GM12878 (cell line): ENCODE measurements at regions of chr11 and their contacts with region 1.

Region 1: DNA sequence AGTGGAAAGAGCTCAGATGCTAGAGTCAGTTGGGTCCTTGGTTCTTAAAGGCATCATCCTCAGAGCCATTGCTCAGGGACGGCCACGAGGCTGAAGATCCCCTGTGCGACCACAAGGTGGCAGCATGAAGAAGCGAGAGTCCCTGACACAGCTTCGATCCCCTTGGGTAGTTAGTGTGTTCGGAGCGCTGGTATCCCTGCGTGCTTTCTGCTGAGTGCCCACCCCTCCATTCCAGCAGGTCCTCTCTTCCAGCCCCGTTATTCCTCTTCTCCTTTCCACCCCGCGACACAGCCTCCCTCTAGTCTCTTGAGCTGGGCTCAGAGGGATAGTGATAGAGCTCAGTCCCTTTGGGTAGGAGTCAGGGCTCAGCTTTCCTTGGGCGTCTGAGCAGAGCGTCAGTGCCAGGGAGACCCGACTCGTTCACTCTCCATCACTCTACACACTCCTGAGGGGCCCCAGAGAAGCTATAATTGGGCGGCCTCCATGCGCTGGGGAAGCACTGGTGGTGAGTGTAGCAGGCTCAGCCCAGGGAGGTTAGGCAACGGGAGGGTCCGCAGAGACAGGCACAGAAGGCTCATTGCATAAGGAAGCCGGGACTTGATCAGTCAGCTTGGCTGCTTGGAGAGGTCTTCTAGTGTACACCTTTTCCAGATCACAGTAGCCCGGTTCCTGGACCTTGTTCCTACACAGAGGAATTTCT is at the start of gene OR51D1:
- DNase-seq: peak; percentile 21
- ATAC-seq: peak; percentile 99
- H3K4me3 ChIP-seq: no peak within 1 kb of the TSS
- H3K27ac ChIP-seq: no peak within 1 kb of the TSS
- H3K4me1 ChIP-seq: no peaks in the 10 kb centered on the region
- H3K27me3 ChIP-seq: no peaks in the 10 kb centered on the region; a peak in 1 of 4 replicates
- CTCF ChIP-seq: peak; percentile 90 to 94 (median 91)
- EP300 ChIP-seq: no peak
- POLR2A ChIP-seq: no peak
- RAD21 ChIP-seq: peak; percentile 71
- polyA plus RNA-seq, gene OR51D1: not detected

Region 2: DNA sequence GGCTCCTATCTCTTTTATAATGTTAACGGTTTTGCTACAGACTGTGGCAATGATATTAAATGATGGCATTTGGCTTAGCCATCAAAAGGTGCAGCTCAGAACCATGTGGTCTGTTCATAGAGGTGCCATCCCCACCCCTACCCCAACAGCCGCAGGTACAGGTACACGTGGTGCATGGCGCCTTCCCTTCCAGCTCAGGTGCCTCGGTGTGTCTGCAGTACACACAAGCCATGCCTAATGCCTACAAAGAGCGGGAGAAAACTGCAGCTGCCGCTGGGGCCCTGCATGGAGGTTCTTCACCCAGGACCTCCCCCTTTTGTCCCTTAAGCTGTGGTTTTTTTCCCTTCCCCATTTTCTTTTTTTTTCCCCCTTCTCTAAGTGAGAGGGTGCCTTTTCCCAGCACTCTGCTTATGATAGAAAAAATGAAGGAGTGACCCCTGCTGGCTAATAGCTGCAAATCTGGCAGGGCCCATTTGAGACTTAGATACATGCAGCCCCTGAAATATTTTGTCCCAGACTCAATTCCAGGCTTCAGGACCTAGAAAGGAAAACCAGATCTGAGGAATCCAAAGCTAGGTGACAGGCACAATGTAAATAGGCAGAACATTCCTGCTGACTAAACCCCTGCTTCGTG is 85.6 kb before region 1 on chr11:
- CTCF ChIA-PET with region 1: no interaction called
- POLR2A ChIA-PET with region 1: no interaction called
- RAD21 ChIA-PET with region 1: no interaction called
- SMC1A ChIA-PET with region 1: no interaction called
- in situ Hi-C with region 1: no loop called
- intact Hi-C with region 1: no loop called
- DNase-seq: no peak
- ATAC-seq: peak; percentile 56; the same call in 1 of the 3 replicates
- H3K4me3 ChIP-seq: no peak overlapping the region
- H3K27ac ChIP-seq: no peak overlapping the region
- H3K4me1 ChIP-seq: no peaks in the 10 kb centered on the region
- H3K27me3 ChIP-seq: no peaks in the 10 kb centered on the region; a peak in 1 of 4 replicates
- CTCF ChIP-seq: peak; percentile 30 to 56 (median 46); a peak in 5 of 6 replicates
- EP300 ChIP-seq: no peak
- POLR2A ChIP-seq: no peak
- RAD21 ChIP-seq: peak; percentile 27

Region 3: GRCh38 chr11:4581443-4581842 is 55.7 kb before region 1 on chr11 and contains the start of gene OR52I2:
- CTCF ChIA-PET with region 1: no interaction called
- POLR2A ChIA-PET with region 1: no interaction called
- RAD21 ChIA-PET with region 1: no interaction called
- SMC1A ChIA-PET with region 1: no interaction called
- in situ Hi-C with region 1: no loop called
- intact Hi-C with region 1: no loop called
- DNase-seq: no peak
- ATAC-seq: no peak
- H3K4me3 ChIP-seq: no peak within 1 kb of the TSS
- H3K27ac ChIP-seq: no peak within 1 kb of the TSS
- H3K4me1 ChIP-seq: no peaks in the 10 kb centered on the region
- H3K27me3 ChIP-seq: no peaks in the 10 kb centered on the region; a peak in 1 of 4 replicates
- CTCF ChIP-seq: no peak
- EP300 ChIP-seq: no peak
- POLR2A ChIP-seq: no peak
- RAD21 ChIP-seq: no peak
- polyA plus RNA-seq, gene OR52I2: not detected

Region 4: DNA sequence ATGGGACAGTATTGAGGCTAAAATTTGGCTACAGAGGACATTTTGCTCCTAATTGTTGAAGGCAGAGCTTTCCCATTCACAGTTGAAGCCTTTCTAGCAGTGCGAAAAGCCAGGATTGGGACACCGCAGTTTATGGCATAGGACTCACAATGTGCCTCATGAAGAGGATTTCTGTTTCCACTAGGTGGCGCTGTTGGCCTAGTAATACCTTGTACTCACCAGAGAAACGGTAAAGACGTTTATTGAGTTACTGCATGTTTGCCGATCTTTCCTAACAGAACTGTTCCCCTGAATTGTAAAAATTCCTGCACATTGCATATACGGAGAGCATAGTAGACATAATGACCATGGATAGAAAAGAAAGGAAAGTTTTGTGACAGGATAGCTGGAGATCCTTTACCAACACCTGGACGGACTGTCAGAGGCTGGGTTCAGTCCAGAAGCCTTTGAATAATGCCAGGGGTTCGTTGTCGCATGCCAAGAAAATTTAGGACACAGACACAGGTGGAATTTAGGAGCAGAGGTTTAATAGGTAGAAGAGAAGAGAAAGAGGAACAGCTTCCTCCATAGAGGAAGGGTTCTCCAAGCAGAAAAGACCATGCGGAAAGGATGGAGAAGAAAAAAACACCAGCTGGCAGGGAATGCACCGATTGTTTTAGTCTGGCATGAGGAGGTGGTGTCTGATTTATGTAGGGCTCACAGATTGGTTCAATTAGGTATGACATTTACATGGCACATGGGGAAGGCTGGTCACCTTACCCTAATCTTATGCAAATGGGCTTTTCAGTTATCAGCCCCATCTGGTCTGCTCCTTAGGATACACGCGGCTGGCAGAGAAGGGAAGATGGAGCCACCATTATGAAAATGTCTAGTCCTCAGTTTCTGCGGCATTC is 10.7 kb before region 1 on chr11:
- CTCF ChIA-PET with region 1: interaction called, 28 read pairs
- POLR2A ChIA-PET with region 1: no interaction called
- RAD21 ChIA-PET with region 1: interaction called, 8 read pairs
- SMC1A ChIA-PET with region 1: interaction called, 14 read pairs
- in situ Hi-C with region 1: no loop called
- intact Hi-C with region 1: no loop called
- DNase-seq: no peak
- ATAC-seq: peak; percentile 86
- H3K4me3 ChIP-seq: no peak overlapping the region
- H3K27ac ChIP-seq: no peak overlapping the region
- H3K4me1 ChIP-seq: no peaks in the 10 kb centered on the region
- H3K27me3 ChIP-seq: no peaks in the 10 kb centered on the region
- CTCF ChIP-seq: peak; percentile 63 to 65 (median 65)
- EP300 ChIP-seq: no peak
- POLR2A ChIP-seq: no peak
- RAD21 ChIP-seq: peak; percentile 61

Region 5: DNA sequence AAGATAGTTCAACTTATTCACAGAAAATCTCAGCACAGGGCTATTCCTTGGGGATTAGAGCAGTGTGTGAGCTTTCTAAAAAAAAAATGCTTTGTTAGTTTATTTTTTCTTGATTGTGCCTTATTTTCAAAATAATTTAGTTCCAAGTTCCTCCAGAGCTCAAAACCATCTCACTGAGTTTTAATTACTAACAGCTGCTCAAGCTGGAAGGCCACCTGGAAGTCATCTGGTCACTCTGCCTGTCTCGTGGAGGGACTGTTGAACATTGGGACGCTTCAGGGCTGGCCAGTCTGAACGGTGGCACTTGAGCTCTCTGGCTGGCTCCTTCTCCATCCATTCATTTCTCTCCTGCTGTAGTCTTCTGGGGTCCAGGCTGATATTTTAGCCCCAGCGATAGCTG is 10.7 kb after region 1 on chr11:
- CTCF ChIA-PET with region 1: interaction called, 21 read pairs
- POLR2A ChIA-PET with region 1: no interaction called
- RAD21 ChIA-PET with region 1: interaction called, 3 read pairs
- SMC1A ChIA-PET with region 1: interaction called, 3 read pairs
- in situ Hi-C with region 1: no loop called
- intact Hi-C with region 1: no loop called
- DNase-seq: no peak
- ATAC-seq: no peak
- H3K4me3 ChIP-seq: no peak overlapping the region
- H3K27ac ChIP-seq: no peak overlapping the region
- H3K4me1 ChIP-seq: no peaks in the 10 kb centered on the region
- H3K27me3 ChIP-seq: no peaks in the 10 kb centered on the region; a peak in 1 of 4 replicates
- CTCF ChIP-seq: no peak
- EP300 ChIP-seq: no peak
- POLR2A ChIP-seq: no peak
- RAD21 ChIP-seq: no peak

Region 6: DNA sequence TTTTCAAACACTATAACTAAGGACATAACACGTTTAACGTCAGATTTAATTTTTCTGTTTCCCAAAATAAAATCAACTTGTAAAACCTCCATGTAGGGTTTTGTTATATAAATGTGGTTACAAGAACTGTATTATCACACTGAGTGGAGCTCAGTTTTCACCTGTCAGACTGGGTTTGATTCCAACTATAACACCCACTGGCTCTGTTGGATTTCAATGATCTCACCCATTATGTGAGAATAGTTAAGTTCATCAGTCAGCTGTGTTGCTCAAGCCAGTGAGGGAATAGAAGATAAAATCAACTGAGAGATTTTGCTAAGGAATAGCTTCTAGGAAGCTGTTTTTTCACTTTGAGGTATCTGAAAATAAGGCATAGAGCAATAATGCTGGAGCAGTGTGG is 172.1 kb after region 1 on chr11:
- CTCF ChIA-PET with region 1: no interaction called
- POLR2A ChIA-PET with region 1: no interaction called
- RAD21 ChIA-PET with region 1: no interaction called
- SMC1A ChIA-PET with region 1: no interaction called
- in situ Hi-C with region 1: no loop called
- intact Hi-C with region 1: no loop called
- DNase-seq: no peak
- ATAC-seq: no peak
- H3K4me3 ChIP-seq: no peak overlapping the region
- H3K27ac ChIP-seq: no peak overlapping the region
- H3K4me1 ChIP-seq: no peaks in the 10 kb centered on the region
- H3K27me3 ChIP-seq: no peaks in the 10 kb centered on the region
- CTCF ChIP-seq: no peak
- EP300 ChIP-seq: no peak
- POLR2A ChIP-seq: no peak
- RAD21 ChIP-seq: no peak

Region 7: DNA sequence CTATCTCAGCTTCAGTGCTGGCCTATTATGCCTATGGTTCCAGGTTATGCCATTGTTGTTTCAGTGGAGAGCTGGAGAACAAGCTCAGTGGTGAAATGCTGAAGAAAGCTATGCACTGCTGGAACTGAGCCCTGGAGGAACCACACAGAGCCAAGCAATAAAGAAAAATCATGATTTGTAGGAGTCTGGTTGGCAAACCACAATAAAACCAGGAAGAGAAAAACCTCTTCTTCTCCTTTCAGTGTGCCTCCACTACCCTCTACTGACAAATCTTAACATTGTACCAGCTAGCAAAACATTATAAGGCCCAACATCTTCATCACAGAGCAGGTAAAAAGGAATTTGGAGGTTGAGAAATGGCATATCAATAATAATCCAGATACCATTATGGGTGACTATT is 189.3 kb after region 1 on chr11:
- CTCF ChIA-PET with region 1: interaction called, 24 read pairs
- POLR2A ChIA-PET with region 1: no interaction called
- RAD21 ChIA-PET with region 1: interaction called, 21 read pairs
- SMC1A ChIA-PET with region 1: interaction called, 19 read pairs
- in situ Hi-C with region 1: loop called (anchors 5 kb)
- intact Hi-C with region 1: loop called (anchors 2 kb)
- DNase-seq: no peak
- ATAC-seq: no peak
- H3K4me3 ChIP-seq: no peak overlapping the region
- H3K27ac ChIP-seq: no peak overlapping the region
- H3K4me1 ChIP-seq: no peaks in the 10 kb centered on the region
- H3K27me3 ChIP-seq: no peaks in the 10 kb centered on the region
- CTCF ChIP-seq: peak in 2 of 3 experiments; percentile 35 to 40; a peak in 3 of 6 replicates
- EP300 ChIP-seq: no peak
- POLR2A ChIP-seq: no peak
- RAD21 ChIP-seq: peak; percentile 42; the same call in 1 of the 2 replicates

Region 8: DNA sequence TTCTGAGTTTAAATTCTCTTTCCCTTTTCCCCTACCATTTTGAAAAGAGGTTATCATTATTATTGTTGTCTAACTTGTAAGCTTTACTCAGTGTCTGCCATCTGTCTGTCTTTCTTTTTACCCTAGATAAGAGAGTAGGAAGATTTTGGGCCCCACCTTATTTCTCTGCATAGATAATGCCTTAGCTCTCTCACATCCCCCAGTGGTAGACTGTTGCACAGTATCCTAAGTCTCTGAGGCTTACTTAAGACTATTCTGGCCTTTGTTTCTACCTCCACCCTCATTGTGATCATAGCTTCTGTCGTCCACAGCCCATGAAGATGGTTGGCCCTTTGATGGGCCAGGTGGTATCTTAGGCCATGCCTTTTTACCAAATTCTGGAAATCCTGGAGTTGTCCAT is 353.9 kb after region 1 on chr11:
- CTCF ChIA-PET with region 1: interaction called, 6 read pairs
- POLR2A ChIA-PET with region 1: no interaction called
- RAD21 ChIA-PET with region 1: no interaction called
- SMC1A ChIA-PET with region 1: interaction called, 3 read pairs
- in situ Hi-C with region 1: loop called (anchors 5 kb)
- intact Hi-C with region 1: no loop called
- DNase-seq: no peak
- ATAC-seq: peak; percentile 69
- H3K4me3 ChIP-seq: no peak overlapping the region
- H3K27ac ChIP-seq: no peak overlapping the region
- H3K4me1 ChIP-seq: no peaks in the 10 kb centered on the region
- H3K27me3 ChIP-seq: no peaks in the 10 kb centered on the region
- CTCF ChIP-seq: peak; percentile 26 to 38 (median 35); a peak in 5 of 6 replicates
- EP300 ChIP-seq: no peak
- POLR2A ChIP-seq: no peak
- RAD21 ChIP-seq: peak; percentile 30; the same call in 1 of the 2 replicates

Region 9: GRCh38 chr11:5004424-5005274 is 367.5 kb after region 1 on chr11:
- CTCF ChIA-PET with region 1: interaction called, 18 read pairs
- POLR2A ChIA-PET with region 1: no interaction called
- RAD21 ChIA-PET with region 1: interaction called, 4 read pairs
- SMC1A ChIA-PET with region 1: interaction called, 9 read pairs
- in situ Hi-C with region 1: no loop called
- intact Hi-C with region 1: loop called (anchors 1 kb)
- DNase-seq: no peak
- ATAC-seq: peak; percentile 70
- H3K4me3 ChIP-seq: no peak overlapping the region
- H3K27ac ChIP-seq: no peak overlapping the region
- H3K4me1 ChIP-seq: no peaks in the 10 kb centered on the region
- H3K27me3 ChIP-seq: no peaks in the 10 kb centered on the region; a peak in 1 of 4 replicates
- CTCF ChIP-seq: peak; percentile 57 to 59 (median 59); a peak in 4 of 6 replicates
- EP300 ChIP-seq: no peak
- POLR2A ChIP-seq: no peak
- RAD21 ChIP-seq: peak; percentile 64